Aorta (tissue), 5 donors: ENCODE measurements at regions of chr3 and their contacts with region 1.

Region 1: GRCh38 chr3:180870008-180870699 is 42.3 kb upstream of the FXR1 start:
- DNase-seq: peak; percentile 61 to 84
- ATAC-seq: peak; percentile 87
- H3K4me3 ChIP-seq: peak overlapping the region; percentile 18 to 30
- H3K27ac ChIP-seq: no peak overlapping the region
- H3K4me1 ChIP-seq: no peaks in the 10 kb centered on the region
- H3K27me3 ChIP-seq: no peaks in the 10 kb centered on the region

Region 2: DNA sequence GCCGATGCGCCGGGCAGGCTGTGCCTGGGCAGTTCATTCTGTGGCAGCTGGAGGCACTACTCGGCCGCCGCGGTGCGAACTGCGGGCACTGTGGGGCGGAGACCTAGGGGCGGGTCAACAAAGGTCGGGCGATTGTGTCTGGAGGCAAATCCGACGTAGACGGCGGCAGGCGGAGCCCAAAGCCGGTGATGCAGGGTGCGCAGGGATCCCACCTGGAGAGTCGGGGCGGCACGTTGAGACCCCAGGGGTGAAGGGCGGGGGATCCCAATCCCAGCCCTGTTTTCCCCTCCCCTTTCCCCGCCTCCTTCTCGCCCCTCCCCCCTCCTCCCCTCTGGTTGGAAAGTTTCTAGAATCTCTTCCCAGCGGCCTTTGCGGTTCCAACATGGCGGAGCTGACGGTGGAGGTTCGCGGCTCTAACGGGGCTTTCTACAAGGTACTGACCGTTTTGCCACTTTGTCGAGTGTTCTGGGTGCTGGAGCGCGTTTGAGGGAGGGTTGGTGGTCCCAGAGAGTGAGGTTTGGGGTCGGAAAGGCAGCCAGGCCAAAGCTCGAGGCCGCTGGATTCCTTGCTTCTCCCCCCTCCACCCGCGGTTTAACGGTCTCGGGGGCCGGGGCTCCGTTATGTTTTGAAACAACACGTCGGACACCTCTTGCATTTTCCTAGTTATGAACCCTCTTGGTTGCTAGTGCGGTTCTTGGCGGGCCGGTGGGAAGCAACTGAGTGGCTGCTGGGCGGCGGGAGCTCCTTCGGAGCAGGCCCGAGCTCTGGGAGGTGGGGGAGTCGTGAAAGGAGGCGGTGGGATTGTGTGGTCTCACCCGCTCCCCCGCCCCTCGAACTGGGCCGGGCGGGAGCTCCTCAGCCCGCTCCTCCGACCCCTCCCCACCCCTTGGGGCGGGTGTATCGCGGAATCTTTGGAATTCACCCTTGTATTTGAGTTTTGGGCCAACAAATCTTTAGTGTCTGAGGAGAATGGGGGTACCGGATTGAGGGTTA is 42.4 kb after region 1 on chr3 and contains the start of gene FXR1:
- intact Hi-C with region 1: loop called in 1 of 2 experiments (anchors 5 kb)
- DNase-seq: peak; percentile 93 to 96
- ATAC-seq: peak; percentile 98
- H3K4me3 ChIP-seq: peak within 1 kb of the TSS; percentile 93 to 100
- H3K27ac ChIP-seq: peak within 1 kb of the TSS; percentile 62 to 91
- H3K4me1 ChIP-seq: peaks cover 0 to 4% of the 10 kb centered on the region in 2 donors
- H3K27me3 ChIP-seq: no peaks in the 10 kb centered on the region
- total RNA-seq, gene FXR1: 106 to 120 TPM